PC-3 (cell line): ENCODE measurements at regions of chr2 and their contacts with region 1.

Region 1: GRCh38 chr2:151409601-151410484 is at the start of gene RIF1:
- DNase-seq: peak; percentile 96
- ATAC-seq: peak; percentile 97
- H3K4me3 ChIP-seq: peak within 1 kb of the TSS; percentile 100
- H3K27ac ChIP-seq: peak within 1 kb of the TSS; percentile 77
- H3K4me1 ChIP-seq: 0 out of 2 replicates have a peak, but pooled peaks cover 7% of the 10 kb centered on the region
- H3K27me3 ChIP-seq: no peaks in the 10 kb centered on the region
- CTCF ChIP-seq: peak; percentile 56
- total RNA-seq, gene RIF1: 33.6 and 37.1 TPM in 2 replicates

Region 2: GRCh38 chr2:151261231-151261976 is 148.4 kb before region 1 on chr2 and contains the start of gene RBM43:
- CTCF ChIA-PET with region 1: no interaction called
- POLR2A ChIA-PET with region 1: interaction called, 34 read pairs
- intact Hi-C with region 1: loop called (anchors 5 kb)
- DNase-seq: peak; percentile 85
- ATAC-seq: peak; percentile 90
- H3K4me3 ChIP-seq: peak within 1 kb of the TSS; percentile 81
- H3K27ac ChIP-seq: peak within 1 kb of the TSS; percentile 75
- H3K4me1 ChIP-seq: peaks cover 14% of the 10 kb centered on the region
- H3K27me3 ChIP-seq: no peaks in the 10 kb centered on the region
- CTCF ChIP-seq: 0 out of 2 replicates have a peak, but pooled peaks have one; percentile 31
- total RNA-seq, gene RBM43: 2.5 and 2.6 TPM in 2 replicates